Activated T-helper 1 cell treated with anti-CD3 and anti-CD28 coated beads, Interleukin-12 subunit alpha, Interleukin-12 subunit beta, Interleukin-2, Interleukin-4 antibody, amounts not matched to agents 30 ng/mL and 10 ng/mL and 1 ng/mL, durations not matched to agents 14 hours and 24 hours and 36 hours (primary cell): ENCODE measurements at regions of chr12 and their contacts with region 1.

Region 1: DNA sequence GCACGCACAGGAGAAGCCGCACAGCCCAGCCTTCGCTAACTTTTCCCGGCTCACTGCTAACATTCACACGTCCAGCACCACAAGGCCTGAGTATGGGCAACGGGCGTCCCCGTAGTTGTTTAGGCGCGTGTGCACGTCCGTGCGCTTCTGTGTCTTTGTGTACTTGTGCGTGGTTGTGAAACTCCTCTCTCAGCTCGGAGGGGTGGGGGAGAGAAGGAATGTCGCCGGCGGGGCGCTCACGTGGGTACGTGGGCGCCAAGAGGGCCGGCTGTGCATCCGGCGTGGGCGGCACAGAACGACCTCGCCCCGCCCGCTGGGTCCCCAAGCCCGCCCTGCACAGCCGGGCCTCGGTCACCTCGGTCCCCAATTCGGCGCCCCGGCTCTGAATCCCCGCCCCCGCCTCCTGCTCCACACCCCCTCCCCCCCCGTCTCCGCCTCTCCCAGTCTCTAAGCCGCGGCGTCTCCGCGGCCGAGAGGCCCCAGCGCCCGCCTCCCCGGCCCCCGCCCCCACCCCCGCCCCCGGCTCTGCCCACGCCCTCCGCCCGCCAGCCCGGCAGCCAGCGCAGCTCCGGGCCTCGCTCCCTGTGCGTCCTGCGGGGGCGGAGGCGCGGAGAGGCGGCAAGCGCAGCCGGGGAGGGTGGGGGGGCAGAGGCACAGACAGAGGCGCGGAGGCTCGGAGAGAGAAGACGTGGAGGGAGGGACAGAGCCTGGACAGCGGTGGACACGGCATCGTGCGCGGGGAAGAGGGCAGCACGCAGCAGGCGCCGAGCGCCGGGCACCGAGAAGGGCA is at the start of gene NAB2:
- DNase-seq: peak; percentile 88
- H3K4me3 Mint-ChIP-seq: peak within 1 kb of the TSS; percentile 97
- H3K27ac Mint-ChIP-seq: peak within 1 kb of the TSS; percentile 98
- H3K4me1 Mint-ChIP-seq: peaks cover 77% of the 10 kb centered on the region
- H3K27me3 Mint-ChIP-seq: no peaks in the 10 kb centered on the region
- total RNA-seq, gene NAB2: 73.6 and 80.3 TPM in 2 replicates

Region 2: DNA sequence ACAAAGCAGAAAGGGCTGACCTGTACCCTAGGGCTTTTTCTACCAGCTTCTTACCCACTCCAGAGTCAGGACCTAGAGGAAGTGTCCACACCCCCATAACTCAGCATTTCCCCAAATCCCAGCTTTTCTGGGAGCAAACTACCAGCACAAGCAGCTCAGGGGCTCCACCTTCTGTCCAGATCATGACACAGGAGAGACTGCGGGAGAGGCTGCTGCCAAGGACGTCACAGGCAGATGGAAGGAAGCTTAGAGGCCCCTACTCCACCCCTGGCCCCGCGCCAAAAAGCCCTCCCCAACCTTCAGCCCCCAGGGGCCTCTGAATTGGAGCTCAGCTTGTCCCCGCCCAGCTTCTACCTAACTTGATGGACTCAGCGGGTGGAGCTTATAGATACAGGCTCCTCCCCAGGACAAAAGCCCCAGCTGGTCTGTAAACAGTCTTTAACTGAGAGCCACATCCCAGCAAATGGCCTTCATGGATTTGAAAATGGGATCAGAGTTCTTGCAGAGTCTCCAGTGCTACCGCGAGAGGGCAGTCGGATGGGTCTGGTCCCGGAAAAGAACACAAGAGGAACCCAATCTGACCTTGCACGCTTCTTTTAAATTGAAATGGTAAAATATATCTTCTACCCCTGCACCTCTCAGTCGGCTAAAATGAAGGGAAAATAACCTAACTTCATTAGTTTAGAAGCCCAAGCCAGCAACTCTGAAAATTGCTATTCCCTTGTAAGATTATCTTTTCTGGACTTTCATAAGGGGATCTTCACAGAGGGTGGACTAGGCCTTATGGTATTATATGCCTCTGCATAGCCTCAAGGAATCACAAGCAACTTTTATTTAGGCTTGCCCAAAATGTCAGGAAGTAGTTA is 451.7 kb before region 1 on chr12:
- intact Hi-C with region 1: loop called (anchors 5 kb)
- DNase-seq: peak; percentile 79
- H3K4me3 Mint-ChIP-seq: peak overlapping the region; percentile 98
- H3K27ac Mint-ChIP-seq: peak overlapping the region; percentile 92
- H3K4me1 Mint-ChIP-seq: peaks cover 62% of the 10 kb centered on the region
- H3K27me3 Mint-ChIP-seq: no peaks in the 10 kb centered on the region

Region 3: DNA sequence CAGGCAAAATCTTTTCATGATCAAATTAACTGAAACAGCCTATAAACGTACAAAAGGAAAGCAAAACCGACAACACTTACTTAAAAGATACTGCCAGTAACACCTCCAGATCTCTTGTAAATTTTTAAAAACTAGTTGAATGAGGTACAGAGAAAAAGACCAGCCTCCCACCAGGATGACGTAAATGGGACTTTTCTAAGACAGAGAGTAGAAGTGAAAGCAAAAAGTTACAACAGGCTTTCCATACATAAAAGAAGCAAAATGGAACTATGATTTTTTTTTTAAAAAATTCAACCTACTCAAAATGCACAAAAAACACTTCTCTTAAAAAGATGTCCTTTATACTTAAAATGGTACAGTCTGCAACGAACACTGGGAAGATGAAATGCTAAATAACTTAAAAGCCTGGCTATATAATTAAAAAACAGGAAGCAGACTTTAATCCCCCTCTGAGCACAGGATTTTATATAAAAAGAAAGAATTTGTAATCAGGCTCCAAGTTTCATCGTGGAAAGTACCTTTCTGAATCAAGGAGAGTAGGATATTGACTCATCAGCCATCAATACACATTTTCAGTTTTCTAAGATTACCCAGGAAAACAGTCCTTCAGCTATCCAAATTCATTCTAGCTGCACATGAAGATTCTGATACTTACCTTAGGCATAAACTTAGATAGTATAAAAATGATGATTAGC is 24.5 kb before region 1 on chr12:
- intact Hi-C with region 1: loop called (anchors 1 kb)
- DNase-seq: peak; percentile 57
- H3K4me3 Mint-ChIP-seq: peak overlapping the region; percentile 82
- H3K27ac Mint-ChIP-seq: peak overlapping the region; percentile 94
- H3K4me1 Mint-ChIP-seq: peaks cover 54% of the 10 kb centered on the region
- H3K27me3 Mint-ChIP-seq: no peaks in the 10 kb centered on the region

Region 4: DNA sequence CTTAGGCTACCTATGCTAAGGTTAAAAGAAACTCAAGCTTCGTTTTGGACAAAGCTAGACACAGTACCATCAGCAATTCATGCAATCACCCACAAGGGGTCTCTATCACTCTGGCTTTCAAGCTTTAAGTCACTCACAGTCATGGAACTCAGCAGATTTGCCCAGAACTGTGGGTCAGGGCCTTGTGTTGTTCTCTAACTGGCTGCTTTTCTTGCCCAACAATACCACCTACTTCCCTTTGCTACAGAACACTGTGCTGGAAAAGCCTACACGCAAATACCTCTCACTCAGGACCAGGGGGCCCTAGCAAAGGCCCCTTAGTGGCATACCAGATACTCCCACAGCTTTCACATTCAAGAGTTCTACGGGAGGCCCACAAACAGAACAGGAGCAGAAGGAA is 19.1 kb before region 1 on chr12:
- intact Hi-C with region 1: loop called (anchors 1 kb)
- DNase-seq: peak; percentile 50
- H3K4me3 Mint-ChIP-seq: peak overlapping the region; percentile 23
- H3K27ac Mint-ChIP-seq: peak overlapping the region; percentile 92
- H3K4me1 Mint-ChIP-seq: peaks cover 58% of the 10 kb centered on the region
- H3K27me3 Mint-ChIP-seq: no peaks in the 10 kb centered on the region

Region 5: GRCh38 chr12:57151741-57152630 is 63.3 kb after region 1 on chr12:
- intact Hi-C with region 1: no loop called
- DNase-seq: no peak
- H3K4me3 Mint-ChIP-seq: no peak overlapping the region
- H3K27ac Mint-ChIP-seq: no peak overlapping the region
- H3K4me1 Mint-ChIP-seq: no peaks in the 10 kb centered on the region
- H3K27me3 Mint-ChIP-seq: peaks cover 1% of the 10 kb centered on the region

Region 6: GRCh38 chr12:57229634-57230380 is 141.2 kb after region 1 on chr12 and contains the start of gene SHMT2:
- intact Hi-C with region 1: loop called (anchors 5 kb)
- DNase-seq: peak; percentile 92
- H3K4me3 Mint-ChIP-seq: peak within 1 kb of the TSS; percentile 98
- H3K27ac Mint-ChIP-seq: peak within 1 kb of the TSS; percentile 96
- H3K4me1 Mint-ChIP-seq: peaks cover 64% of the 10 kb centered on the region
- H3K27me3 Mint-ChIP-seq: peaks cover 20% of the 10 kb centered on the region
- total RNA-seq, gene SHMT2: 276 and 280 TPM in 2 replicates

Region 7: DNA sequence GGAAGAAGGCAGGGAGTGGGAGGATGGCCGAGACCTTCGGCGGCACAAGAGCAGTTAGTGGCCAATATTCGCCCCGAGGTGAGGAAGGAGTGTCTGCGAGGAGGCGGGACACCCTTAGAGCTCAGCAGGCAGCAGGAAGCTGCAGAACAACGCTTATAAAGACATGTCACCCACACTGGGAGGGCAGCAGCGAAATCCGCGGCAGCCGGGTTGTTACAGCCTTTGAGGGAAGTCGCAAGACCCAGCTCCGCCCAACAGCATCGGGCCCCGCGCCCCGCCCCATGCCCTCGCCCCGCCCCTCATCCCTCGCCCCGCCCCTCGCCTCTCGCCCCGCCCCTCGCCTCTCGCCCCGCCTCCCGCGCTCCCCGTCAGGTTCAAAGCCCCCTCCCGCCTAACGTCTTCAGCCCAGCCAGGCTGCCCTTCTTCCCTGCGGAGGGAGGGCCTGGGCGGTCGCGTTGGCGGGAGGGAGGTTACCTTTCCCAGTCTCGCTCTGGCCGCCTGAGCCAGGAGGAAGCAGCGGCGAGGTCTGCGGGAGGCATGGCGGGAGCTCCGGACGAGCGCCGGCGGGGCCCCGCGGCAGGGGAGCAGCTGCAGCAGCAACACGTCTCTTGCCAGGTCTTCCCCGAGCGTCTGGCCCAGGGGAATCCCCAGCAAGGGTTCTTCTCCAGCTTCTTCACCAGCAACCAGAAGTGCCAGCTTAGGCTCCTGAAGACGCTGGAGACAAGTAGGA is 852.7 kb after region 1 on chr12 and contains the start of gene ATP23:
- intact Hi-C with region 1: loop called (anchors 10 kb)
- DNase-seq: peak; percentile 86
- H3K4me3 Mint-ChIP-seq: peak within 1 kb of the TSS; percentile 89
- H3K27ac Mint-ChIP-seq: peak within 1 kb of the TSS; percentile 95
- H3K4me1 Mint-ChIP-seq: peaks cover 46% of the 10 kb centered on the region
- H3K27me3 Mint-ChIP-seq: no peaks in the 10 kb centered on the region
- total RNA-seq, gene ATP23: 7.3 and 8.7 TPM in 2 replicates